ENCODE measurements at regions of chr12 and their contacts with region 1.

Region 1: DNA sequence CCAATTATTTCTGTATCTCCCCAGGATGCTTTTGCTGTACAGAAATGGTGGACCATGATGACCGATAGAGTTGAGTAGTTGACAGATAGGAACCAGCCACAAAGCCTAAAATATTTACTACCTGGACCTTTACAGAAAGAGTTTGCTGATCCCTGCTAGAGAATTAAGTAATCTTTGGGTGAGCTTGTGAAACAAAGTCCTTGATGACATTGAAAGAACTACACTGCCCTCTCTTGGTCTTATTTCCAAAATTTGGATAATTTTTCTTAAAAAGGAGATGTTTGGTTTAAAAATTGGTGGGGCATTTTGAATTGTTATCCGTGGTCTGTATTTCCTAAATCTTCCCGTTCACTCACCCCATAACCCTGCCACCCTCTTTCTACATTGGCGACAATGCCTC is 13.7 kb upstream of the TCTN1 start:
- DNase-seq: no peak
- H3K4me3 Mint-ChIP-seq: no peak overlapping the region
- H3K27ac Mint-ChIP-seq: no peak overlapping the region
- H3K4me1 Mint-ChIP-seq: peaks cover 14% of the 10 kb centered on the region
- H3K27me3 Mint-ChIP-seq: no peaks in the 10 kb centered on the region

Region 2: GRCh38 chr12:110193196-110193595 is 407.1 kb before region 1 on chr12:
- CTCF ChIA-PET with region 1: no interaction called
- DNase-seq: no peak
- H3K4me3 Mint-ChIP-seq: no peak overlapping the region
- H3K27ac Mint-ChIP-seq: no peak overlapping the region
- H3K4me1 Mint-ChIP-seq: no peaks in the 10 kb centered on the region
- H3K27me3 Mint-ChIP-seq: no peaks in the 10 kb centered on the region

Region 3: GRCh38 chr12:110421159-110421661 is 179.0 kb before region 1 on chr12:
- CTCF ChIA-PET with region 1: no interaction called
- DNase-seq: no peak
- H3K4me3 Mint-ChIP-seq: no peak overlapping the region
- H3K27ac Mint-ChIP-seq: no peak overlapping the region
- H3K4me1 Mint-ChIP-seq: no peaks in the 10 kb centered on the region
- H3K27me3 Mint-ChIP-seq: peaks cover 54% of the 10 kb centered on the region

Region 4: DNA sequence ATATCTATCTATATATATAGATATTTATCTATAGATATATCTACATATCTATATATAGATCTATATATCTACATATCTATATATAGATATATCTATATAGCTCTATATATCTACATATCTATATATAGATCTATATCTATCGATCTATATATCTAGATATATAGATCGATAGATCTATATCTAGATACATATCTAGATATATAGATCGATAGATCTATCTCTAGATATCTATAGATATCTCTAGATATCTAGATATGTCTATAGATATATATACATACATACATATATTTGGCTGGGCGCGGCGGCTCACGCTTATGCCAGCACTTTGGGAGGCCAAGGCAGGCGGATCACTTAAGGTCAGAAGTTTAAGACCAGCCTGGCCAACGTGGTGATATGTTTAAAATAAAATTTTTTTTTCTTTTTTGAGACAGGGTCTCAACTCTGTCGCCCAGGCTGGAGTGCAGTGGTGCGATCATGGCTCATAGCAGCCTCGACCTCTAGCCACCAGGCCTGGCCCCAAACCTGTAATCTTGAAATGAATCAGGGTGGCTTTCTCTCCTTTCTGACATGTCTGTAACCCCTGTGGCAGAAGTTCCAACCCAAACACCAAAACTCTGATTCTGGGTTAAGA is 168.2 kb before region 1 on chr12:
- CTCF ChIA-PET with region 1: interaction called, 13 read pairs
- DNase-seq: no peak
- H3K4me3 Mint-ChIP-seq: no peak overlapping the region
- H3K27ac Mint-ChIP-seq: peak overlapping the region; percentile 78
- H3K4me1 Mint-ChIP-seq: peaks cover 5% of the 10 kb centered on the region
- H3K27me3 Mint-ChIP-seq: peaks cover 6% of the 10 kb centered on the region

Region 5: DNA sequence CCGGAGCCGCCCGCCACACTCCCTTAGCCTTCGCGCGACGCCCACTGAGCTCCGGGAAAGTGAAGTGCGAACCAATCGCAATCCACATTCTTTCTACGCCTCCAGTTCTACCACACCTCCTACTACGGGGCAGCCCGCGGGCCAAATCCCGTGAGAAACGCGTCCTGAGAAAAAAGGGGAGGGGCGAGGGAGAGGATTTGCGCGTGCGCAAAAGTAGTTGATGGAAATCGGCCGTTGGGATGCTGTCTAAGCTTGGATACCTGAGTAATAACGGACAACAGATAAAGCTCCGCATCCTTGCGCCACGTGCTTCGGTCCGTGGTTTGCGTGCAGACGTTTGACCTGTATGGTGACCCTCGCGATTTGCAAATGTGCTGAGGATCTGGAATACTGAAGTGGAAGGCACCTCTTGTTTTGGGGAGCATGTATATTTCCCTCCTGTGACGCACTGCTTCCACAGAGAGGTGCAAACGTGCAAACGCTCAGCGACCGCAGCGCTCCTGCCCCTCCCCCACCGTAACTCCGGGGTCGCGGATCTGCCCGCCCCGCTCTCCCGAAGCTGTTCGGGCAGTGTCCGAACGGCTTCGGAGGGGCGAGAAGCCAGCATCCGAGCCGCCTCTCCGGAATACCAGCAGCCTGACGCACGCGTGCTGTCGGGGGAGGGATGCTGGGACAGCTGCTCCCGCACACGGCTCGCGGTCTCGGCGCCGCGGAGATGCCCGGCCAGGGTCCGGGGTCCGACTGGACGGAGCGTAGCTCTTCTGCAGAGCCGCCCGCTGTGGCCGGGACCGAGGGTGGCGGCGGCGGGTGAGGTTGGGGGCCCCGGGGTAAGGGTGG is 131.8 kb before region 1 on chr12 and contains the starts of genes FAM216A and GPN3:
- CTCF ChIA-PET with region 1: interaction called, 41 read pairs
- DNase-seq: peak; percentile 97
- H3K4me3 Mint-ChIP-seq: peak within 1 kb of the TSS; percentile 98
- H3K27ac Mint-ChIP-seq: peak within 1 kb of the TSS; percentile 99
- H3K4me1 Mint-ChIP-seq: peaks cover 45% of the 10 kb centered on the region
- H3K27me3 Mint-ChIP-seq: no peaks in the 10 kb centered on the region

Region 6: DNA sequence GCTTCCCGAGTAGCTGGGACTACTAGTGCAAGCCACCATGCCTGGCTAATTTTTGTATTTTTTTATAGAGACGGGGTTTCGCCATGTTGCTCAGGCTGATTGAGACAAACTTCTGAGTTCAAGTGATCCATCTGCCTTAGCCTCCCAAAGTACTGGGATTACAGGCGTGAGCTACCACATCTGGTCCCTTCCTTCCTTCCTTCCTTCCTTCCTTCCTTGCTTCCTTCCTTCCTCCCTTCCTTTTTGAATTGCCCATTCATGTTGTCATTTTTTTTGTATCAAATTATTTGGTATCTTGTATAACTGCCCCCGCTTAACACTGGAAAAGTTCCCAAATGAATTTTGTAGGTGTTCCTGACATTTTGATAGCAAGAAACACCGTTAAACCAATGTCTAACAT is 86.4 kb before region 1 on chr12:
- CTCF ChIA-PET with region 1: interaction called, 78 read pairs
- DNase-seq: no peak
- H3K4me3 Mint-ChIP-seq: no peak overlapping the region
- H3K27ac Mint-ChIP-seq: peak overlapping the region; percentile 55
- H3K4me1 Mint-ChIP-seq: peaks cover 2% of the 10 kb centered on the region
- H3K27me3 Mint-ChIP-seq: peaks cover 11% of the 10 kb centered on the region

Region 7: DNA sequence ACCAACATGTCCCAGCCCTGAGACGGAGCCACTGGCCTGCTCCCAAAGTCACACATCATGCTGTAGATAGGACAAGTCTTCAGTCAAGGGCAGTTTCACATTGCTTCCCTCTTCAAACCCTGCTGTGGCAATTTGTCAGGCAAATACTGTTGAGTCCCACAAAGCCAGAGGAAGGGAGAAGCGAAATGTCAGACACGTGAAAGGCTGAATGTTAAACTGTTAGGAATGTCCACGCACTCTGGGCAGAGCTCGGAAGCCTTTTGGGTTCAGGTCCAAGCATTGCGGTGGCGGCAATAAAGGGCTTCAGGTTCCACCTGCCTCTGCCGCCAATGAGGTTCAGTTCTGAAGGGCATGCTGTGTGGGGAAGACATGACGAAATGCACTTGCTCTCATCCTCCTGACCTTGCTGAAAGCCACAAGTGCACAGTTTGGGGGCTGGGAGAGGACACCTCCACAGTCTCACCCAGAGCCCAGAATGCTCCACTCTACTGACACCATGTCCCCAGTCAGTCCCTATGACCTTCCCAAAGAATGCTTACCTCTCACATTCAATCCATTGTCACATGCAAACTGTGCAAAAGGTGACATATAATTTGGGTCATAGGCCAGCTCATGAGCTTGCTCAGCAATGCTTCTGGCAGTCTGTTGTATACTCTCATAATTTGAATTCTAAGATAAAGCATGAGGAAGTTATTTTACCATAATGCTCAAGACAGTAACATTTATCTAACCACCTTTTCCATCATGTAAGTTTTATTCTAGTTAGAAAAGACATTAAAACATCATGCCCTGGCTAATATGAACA is 62.4 kb before region 1 on chr12:
- CTCF ChIA-PET with region 1: interaction called, 17 read pairs
- DNase-seq: no peak
- H3K4me3 Mint-ChIP-seq: no peak overlapping the region
- H3K27ac Mint-ChIP-seq: no peak overlapping the region
- H3K4me1 Mint-ChIP-seq: peaks cover 7% of the 10 kb centered on the region
- H3K27me3 Mint-ChIP-seq: no peaks in the 10 kb centered on the region

Region 8: GRCh38 chr12:110583137-110584059 is 16.9 kb before region 1 on chr12 and contains the start of gene PPTC7:
- CTCF ChIA-PET with region 1: interaction called, 19 read pairs
- DNase-seq: peak; percentile 98
- H3K4me3 Mint-ChIP-seq: peak within 1 kb of the TSS; percentile 88
- H3K27ac Mint-ChIP-seq: peak within 1 kb of the TSS; percentile 97
- H3K4me1 Mint-ChIP-seq: peaks cover 62% of the 10 kb centered on the region
- H3K27me3 Mint-ChIP-seq: no peaks in the 10 kb centered on the region

Region 9: GRCh38 chr12:110698171-110698902 is 98.1 kb after region 1 on chr12:
- CTCF ChIA-PET with region 1: interaction called, 13 read pairs
- DNase-seq: peak; percentile 90
- H3K4me3 Mint-ChIP-seq: no peak overlapping the region
- H3K27ac Mint-ChIP-seq: peak overlapping the region; percentile 77
- H3K4me1 Mint-ChIP-seq: peaks cover 24% of the 10 kb centered on the region
- H3K27me3 Mint-ChIP-seq: no peaks in the 10 kb centered on the region

Region 10: GRCh38 chr12:110742718-110743570 is 142.7 kb after region 1 on chr12 and contains the start of gene PPP1CC:
- CTCF ChIA-PET with region 1: no interaction called
- DNase-seq: peak; percentile 94
- H3K4me3 Mint-ChIP-seq: peak within 1 kb of the TSS; percentile 99
- H3K27ac Mint-ChIP-seq: peak within 1 kb of the TSS; percentile 98
- H3K4me1 Mint-ChIP-seq: peaks cover 40% of the 10 kb centered on the region
- H3K27me3 Mint-ChIP-seq: peaks cover 6% of the 10 kb centered on the region